ENCODE measurements at regions of chr15 and their contacts with region 1.

Region 1: DNA sequence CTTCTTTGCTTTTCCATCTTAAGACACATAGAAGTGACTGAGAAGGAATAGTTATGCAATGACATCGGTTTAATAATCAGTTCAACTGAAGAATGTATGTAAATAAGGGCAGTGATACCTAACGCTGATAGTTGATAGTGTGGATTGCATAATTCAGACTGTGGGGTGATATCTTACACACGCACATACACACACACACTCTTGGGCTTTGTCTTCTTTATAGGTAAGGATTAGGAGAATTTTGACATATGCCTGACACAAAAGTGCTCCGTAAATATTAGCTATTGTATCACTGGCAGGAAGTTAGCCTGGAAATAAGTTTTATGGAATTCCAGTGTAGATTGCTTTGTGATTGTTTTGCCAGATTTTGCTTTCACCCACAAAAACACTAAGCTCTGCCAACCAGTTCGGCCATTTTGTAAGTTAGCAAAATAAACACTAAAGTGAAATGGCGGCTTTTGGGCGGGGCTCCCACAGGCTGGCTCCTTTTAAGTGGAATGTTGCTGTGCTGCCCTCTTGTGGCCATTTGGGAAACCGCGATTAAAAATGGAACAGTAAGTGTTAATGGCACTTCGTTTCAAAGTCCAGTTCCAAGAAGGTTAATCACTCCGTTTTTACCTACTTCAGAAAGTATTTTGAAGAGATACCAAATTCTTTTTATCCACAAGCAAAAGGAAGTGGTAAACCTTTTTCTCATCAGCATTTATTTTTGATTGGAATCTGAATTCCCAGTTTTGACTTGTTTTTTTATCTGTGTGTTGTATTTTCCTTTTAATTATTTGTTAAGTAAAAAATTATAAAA is 17.7 kb downstream of the CHD2 start:
- DNase-seq: peak; percentile 98
- H3K4me3 Mint-ChIP-seq: peak overlapping the region; percentile 41
- H3K27ac Mint-ChIP-seq: peak overlapping the region; percentile 98
- H3K4me1 Mint-ChIP-seq: peaks cover 85% of the 10 kb centered on the region
- H3K27me3 Mint-ChIP-seq: no peaks in the 10 kb centered on the region

Region 2: GRCh38 chr15:92677999-92678398 is 239.8 kb before region 1 on chr15:
- CTCF ChIA-PET with region 1: no interaction called
- intact Hi-C with region 1: no loop called
- DNase-seq: no peak
- H3K4me3 Mint-ChIP-seq: no peak overlapping the region
- H3K27ac Mint-ChIP-seq: no peak overlapping the region
- H3K4me1 Mint-ChIP-seq: no peaks in the 10 kb centered on the region
- H3K27me3 Mint-ChIP-seq: peaks cover 3% of the 10 kb centered on the region

Region 3: DNA sequence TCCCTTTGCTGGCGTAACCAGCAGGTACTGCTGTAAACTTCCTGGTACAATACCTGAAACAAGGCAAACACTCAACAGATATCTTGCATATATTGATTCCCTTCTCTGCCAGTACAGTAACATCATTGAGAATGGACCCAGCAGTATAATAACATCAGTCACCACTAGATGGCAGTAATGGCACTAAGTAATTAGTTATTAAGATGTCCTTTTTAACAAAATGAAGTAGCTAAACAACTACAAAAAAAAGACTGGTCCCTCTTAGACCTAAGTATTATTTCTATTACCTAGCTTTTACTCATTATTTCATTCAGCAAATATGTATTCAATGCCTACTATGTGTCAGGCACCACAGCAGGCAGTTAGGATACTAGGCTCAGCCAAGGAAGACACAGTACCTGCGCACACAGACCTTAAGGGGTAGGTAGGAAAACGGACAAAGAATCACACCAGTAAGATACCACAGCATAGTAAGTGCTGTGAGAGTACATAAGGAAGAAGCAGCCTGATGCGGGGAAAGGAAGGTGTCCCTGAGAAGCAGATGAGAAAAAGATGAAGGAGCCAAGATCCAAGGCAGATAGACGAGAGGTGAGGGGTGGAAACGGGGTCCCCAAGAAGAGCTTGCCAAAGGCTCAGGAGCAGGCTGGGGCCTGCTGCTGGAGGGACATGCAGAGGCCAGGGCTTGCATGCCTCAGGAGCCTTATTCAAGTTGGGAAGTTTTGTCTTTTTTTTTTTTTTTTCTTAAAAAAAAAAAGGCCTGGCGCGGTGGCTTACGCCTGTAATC is 120.4 kb before region 1 on chr15:
- CTCF ChIA-PET with region 1: interaction called, 61 read pairs
- intact Hi-C with region 1: loop called (anchors 1 kb)
- DNase-seq: peak; percentile 53
- H3K4me3 Mint-ChIP-seq: no peak overlapping the region
- H3K27ac Mint-ChIP-seq: peak overlapping the region; percentile 19
- H3K4me1 Mint-ChIP-seq: peaks cover 11% of the 10 kb centered on the region
- H3K27me3 Mint-ChIP-seq: no peaks in the 10 kb centered on the region

Region 4: DNA sequence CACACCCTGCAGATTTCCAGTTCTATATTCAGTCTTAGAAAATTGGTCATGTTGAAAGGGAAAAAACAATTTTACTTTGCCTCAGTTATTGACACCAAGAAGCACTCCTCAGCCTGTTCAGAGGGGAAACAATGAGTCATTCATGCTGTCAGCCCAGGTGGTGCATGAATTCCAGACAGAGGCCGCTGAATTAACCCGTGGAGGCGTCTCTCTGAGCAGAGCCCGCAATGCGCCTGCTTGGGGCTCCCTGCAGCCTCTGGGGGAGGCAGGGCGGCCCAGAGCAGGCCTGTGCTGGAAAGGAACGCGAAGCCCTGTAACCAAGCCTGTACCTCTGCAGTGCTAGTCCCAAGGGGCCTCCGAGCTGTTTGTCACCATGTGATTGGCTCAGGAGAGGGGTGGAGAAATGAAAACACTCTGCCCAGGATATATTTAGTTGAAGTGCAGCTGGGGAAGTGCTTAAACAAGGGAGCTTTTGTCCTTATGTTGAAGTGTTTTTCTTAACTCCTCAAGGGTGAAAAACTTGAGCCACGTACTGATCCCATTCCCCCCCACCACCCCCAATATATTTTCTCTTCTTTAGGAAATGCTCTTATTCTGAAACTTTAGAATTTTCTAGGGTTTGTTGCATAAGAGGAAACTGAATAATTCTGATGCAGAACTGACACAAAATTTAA is 86.0 kb before region 1 on chr15:
- CTCF ChIA-PET with region 1: interaction called, 4 read pairs
- intact Hi-C with region 1: loop called (anchors 1 kb)
- DNase-seq: peak; percentile 95
- H3K4me3 Mint-ChIP-seq: peak overlapping the region; percentile 64
- H3K27ac Mint-ChIP-seq: peak overlapping the region; percentile 96
- H3K4me1 Mint-ChIP-seq: peaks cover 64% of the 10 kb centered on the region
- H3K27me3 Mint-ChIP-seq: no peaks in the 10 kb centered on the region

Region 5: GRCh38 chr15:92881802-92882696 is 35.8 kb before region 1 on chr15:
- CTCF ChIA-PET with region 1: interaction called, 7 read pairs
- intact Hi-C with region 1: loop called (anchors 1 kb)
- DNase-seq: peak; percentile 100
- H3K4me3 Mint-ChIP-seq: peak overlapping the region; percentile 95
- H3K27ac Mint-ChIP-seq: peak overlapping the region; percentile 98
- H3K4me1 Mint-ChIP-seq: peaks cover 51% of the 10 kb centered on the region
- H3K27me3 Mint-ChIP-seq: no peaks in the 10 kb centered on the region

Region 6: GRCh38 chr15:92942706-92943105 is 24.9 kb after region 1 on chr15:
- CTCF ChIA-PET with region 1: no interaction called
- intact Hi-C with region 1: loop called (anchors 2 kb)
- DNase-seq: no peak
- H3K4me3 Mint-ChIP-seq: no peak overlapping the region
- H3K27ac Mint-ChIP-seq: peak overlapping the region; percentile 43
- H3K4me1 Mint-ChIP-seq: peaks cover 18% of the 10 kb centered on the region
- H3K27me3 Mint-ChIP-seq: no peaks in the 10 kb centered on the region

Region 7: DNA sequence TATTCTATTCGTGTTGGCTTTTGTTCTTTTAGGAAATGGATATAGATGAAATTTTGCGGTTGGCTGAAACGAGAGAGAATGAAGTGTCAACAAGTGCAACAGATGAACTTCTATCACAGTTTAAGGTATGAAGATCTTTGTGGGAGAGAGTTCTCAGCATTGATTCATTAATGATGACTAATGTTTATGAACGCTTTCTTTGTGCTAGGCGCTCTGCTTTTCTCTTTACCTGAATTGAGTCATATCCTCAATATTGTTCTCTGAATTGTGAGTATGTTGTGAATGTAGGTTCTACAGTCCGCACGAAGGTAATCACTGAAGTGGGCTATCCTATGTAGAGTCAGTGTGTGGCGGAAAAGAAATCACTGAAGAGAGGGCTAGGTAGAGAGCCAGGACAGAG is 63.5 kb after region 1 on chr15:
- CTCF ChIA-PET with region 1: no interaction called
- intact Hi-C with region 1: loop called (anchors 2 kb)
- DNase-seq: no peak
- H3K4me3 Mint-ChIP-seq: no peak overlapping the region
- H3K27ac Mint-ChIP-seq: no peak overlapping the region
- H3K4me1 Mint-ChIP-seq: peaks cover 8% of the 10 kb centered on the region
- H3K27me3 Mint-ChIP-seq: no peaks in the 10 kb centered on the region

Measured in activated naive CD4-positive, alpha-beta T cell treated with anti-CD3 and anti-CD28 coated beads for 36 hours (primary cell).